ENCODE measurements at regions of chr22 and their contacts with region 1.

Region 1: DNA sequence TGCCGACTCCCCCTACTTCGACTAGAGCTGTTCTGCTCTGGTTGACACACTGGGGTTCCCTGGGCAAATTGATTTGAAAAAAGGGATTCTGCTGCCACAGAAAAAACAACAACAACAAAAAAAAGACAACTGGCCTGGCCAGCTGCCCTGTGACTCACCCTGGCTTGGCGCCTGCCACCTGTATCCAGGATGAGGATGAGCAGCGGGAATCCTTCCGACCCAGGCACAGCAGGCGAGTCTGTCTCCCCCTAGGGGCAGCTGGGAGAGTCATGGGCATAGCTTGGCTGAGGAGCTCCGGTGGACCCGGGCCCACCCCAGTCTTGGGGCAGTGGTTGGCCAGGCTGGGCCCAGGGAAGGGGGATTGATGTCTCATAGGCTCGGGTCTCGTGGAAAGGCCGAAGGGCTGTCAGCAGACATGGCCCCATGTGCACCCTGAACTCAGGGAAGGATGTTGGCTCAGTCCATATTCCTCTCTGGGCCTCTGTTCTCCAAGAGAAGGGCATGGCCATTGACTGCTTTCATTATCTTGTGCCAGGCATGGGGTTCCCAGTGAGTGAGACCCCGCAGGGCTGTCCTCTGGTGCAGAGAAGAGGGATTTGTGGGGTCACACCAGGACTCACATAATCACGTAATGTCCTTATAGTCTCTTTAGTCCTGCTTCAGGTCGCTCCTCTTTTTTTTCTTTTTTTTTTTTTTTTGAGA is 10.4 kb upstream of the SUN2 start:
- DNase-seq: peak; percentile 29
- ATAC-seq: peak; percentile 55
- H3K4me3 Mint-ChIP-seq: no peak overlapping the region
- H3K27ac Mint-ChIP-seq: no peak overlapping the region
- H3K4me1 Mint-ChIP-seq: peaks cover 2% of the 10 kb centered on the region
- H3K27me3 Mint-ChIP-seq: no peaks in the 10 kb centered on the region
- CTCF ChIP-seq: no peak

Region 2: DNA sequence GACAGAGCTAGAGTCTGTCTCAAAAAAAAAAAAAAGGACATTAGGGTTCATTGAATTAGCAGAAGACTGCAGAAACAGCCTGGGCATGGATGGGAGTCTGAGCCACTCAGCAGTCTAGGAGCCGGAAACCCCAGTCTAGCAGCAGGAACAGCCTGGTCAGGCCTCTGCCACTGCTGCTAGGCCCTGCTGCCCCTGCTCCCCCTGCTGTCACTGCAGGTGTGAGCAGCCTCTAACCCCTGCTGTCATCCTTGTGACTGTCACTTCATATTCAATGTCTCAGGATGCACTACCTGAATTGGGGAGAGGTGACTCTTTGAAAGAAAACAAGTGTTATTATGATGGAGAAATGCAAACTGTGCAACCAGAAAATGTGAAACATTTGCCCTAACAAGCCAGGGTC is 253.2 kb before region 1 on chr22:
- CTCF ChIA-PET with region 1: no interaction called
- POLR2A ChIA-PET with region 1: no interaction called
- intact Hi-C with region 1: no loop called
- DNase-seq: no peak
- ATAC-seq: peak; percentile 79
- H3K4me3 Mint-ChIP-seq: no peak overlapping the region
- H3K27ac Mint-ChIP-seq: no peak overlapping the region
- H3K4me1 Mint-ChIP-seq: peaks cover 1% of the 10 kb centered on the region
- H3K27me3 Mint-ChIP-seq: no peaks in the 10 kb centered on the region
- CTCF ChIP-seq: no peak

Region 3: DNA sequence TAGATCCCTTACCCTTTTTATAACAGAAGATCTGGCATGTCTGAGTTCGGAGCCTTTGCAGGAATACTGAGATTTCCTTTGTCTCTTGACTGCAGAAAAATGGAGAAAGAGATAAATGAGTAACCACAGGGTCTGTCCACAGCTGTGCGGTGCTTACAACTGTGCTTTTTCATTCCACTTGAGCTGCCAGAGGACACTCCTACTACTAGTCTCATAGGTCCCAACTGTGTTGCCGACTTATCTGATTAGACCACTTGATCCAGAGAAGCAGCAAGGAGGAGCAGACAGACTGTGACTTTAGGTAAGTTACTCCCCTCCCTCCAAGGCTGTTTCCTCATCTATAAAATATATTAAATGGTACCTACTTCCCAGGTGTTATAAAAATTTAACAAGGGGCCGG is 127.5 kb before region 1 on chr22:
- CTCF ChIA-PET with region 1: no interaction called
- POLR2A ChIA-PET with region 1: no interaction called
- intact Hi-C with region 1: no loop called
- DNase-seq: no peak
- ATAC-seq: no peak
- H3K4me3 Mint-ChIP-seq: no peak overlapping the region
- H3K27ac Mint-ChIP-seq: no peak overlapping the region
- H3K4me1 Mint-ChIP-seq: no peaks in the 10 kb centered on the region
- H3K27me3 Mint-ChIP-seq: peaks cover 12% of the 10 kb centered on the region
- CTCF ChIP-seq: no peak

Region 4: GRCh38 chr22:38681784-38682335 is 84.4 kb before region 1 on chr22 and contains the start of gene TOMM22:
- CTCF ChIA-PET with region 1: interaction called, 4 read pairs
- POLR2A ChIA-PET with region 1: interaction called, 4 read pairs
- intact Hi-C with region 1: loop called (anchors 2 kb)
- DNase-seq: peak; percentile 84
- ATAC-seq: peak; percentile 98
- H3K4me3 Mint-ChIP-seq: peak within 1 kb of the TSS; percentile 97
- H3K27ac Mint-ChIP-seq: peak within 1 kb of the TSS; percentile 92
- H3K4me1 Mint-ChIP-seq: peaks cover 20% of the 10 kb centered on the region
- H3K27me3 Mint-ChIP-seq: no peaks in the 10 kb centered on the region
- CTCF ChIP-seq: no peak
- total RNA-seq, gene TOMM22: 99.4 and 109 TPM in 2 replicates

Region 5: DNA sequence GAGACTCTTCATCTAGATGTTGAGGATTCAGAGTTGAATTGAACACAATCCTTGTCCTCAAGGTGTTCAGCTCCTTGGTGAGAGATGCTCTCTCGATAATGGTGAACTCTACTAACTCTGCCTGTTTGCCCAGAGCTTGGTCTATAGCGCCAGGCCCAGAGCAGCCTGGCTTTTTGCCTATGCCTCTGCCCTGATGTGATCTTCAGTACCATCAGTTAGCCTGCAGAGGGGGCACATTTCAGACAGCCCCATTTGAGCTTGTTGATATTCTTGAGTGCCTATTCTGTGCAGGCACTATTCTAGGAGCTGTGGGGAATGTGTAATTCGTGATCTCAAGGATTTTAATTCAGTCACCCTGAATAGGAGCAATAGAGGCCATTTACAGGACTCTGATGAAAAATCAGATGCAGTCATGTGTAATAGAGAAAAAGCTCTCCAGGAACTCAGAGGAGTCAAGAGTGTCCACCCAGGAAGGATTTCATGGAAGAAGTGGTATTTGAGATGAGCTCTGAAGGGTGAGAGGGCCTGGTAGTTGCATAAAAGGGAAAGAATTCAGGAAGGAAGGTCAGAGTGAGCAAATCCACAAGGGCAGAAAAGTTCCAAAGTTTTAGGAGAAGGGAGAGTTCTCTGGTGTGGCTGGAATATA is 41.2 kb before region 1 on chr22:
- CTCF ChIA-PET with region 1: interaction called, 11 read pairs
- POLR2A ChIA-PET with region 1: interaction called, 4 read pairs
- intact Hi-C with region 1: no loop called
- DNase-seq: no peak
- ATAC-seq: peak; percentile 88
- H3K4me3 Mint-ChIP-seq: no peak overlapping the region
- H3K27ac Mint-ChIP-seq: no peak overlapping the region
- H3K4me1 Mint-ChIP-seq: no peaks in the 10 kb centered on the region
- H3K27me3 Mint-ChIP-seq: no peaks in the 10 kb centered on the region
- CTCF ChIP-seq: no peak

Region 6: DNA sequence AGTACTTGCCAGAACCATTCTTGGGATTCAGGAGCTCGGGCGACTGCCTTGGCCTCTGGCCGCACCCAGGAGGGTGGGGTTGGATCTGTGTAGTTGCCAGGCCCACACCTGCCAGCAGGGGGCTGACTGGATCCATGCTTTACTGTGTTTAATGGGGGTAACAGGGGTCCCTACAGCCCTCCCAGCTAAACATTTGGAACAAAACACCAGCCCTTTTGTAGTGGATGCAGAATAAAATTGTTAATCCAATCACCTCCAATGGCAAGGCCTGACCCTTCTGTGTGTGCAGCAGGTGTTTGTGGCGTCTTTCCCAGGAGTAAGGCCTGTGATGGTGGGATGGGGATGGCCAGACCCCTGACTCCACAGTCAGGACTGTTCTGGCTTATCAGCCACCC is 32.9 kb before region 1 on chr22:
- CTCF ChIA-PET with region 1: interaction called, 26 read pairs
- POLR2A ChIA-PET with region 1: interaction called, 9 read pairs
- intact Hi-C with region 1: loop called (anchors 1 kb)
- DNase-seq: no peak
- ATAC-seq: peak; percentile 76
- H3K4me3 Mint-ChIP-seq: no peak overlapping the region
- H3K27ac Mint-ChIP-seq: peak overlapping the region; percentile 75
- H3K4me1 Mint-ChIP-seq: peaks cover 26% of the 10 kb centered on the region
- H3K27me3 Mint-ChIP-seq: no peaks in the 10 kb centered on the region
- CTCF ChIP-seq: peak; percentile 58

Measured in activated B cell treated with CpG ODN at 0.5 μM for 24 hours (primary cell).